Endothelial cell of umbilical vein (primary cell): ENCODE measurements at regions of chr5 and their contacts with region 1.

Region 1: GRCh38 chr5:1799602-1800471 is at the start of gene MRPL36:
- DNase-seq: peak; percentile 91
- H3K4me3 ChIP-seq: peak within 1 kb of the TSS; percentile 58 to 90 (median 62)
- H3K27ac ChIP-seq: peak within 1 kb of the TSS; percentile 70
- H3K4me1 ChIP-seq: peaks cover 21% of the 10 kb centered on the region
- H3K27me3 ChIP-seq: no peaks in the 10 kb centered on the region
- CTCF ChIP-seq: peak in 1 of 2 donors; percentile 13
- POLR2A ChIP-seq: peak; percentile 85
- total RNA-seq, gene MRPL36: 63.4 and 70.3 TPM in 2 replicates

Region 2: DNA sequence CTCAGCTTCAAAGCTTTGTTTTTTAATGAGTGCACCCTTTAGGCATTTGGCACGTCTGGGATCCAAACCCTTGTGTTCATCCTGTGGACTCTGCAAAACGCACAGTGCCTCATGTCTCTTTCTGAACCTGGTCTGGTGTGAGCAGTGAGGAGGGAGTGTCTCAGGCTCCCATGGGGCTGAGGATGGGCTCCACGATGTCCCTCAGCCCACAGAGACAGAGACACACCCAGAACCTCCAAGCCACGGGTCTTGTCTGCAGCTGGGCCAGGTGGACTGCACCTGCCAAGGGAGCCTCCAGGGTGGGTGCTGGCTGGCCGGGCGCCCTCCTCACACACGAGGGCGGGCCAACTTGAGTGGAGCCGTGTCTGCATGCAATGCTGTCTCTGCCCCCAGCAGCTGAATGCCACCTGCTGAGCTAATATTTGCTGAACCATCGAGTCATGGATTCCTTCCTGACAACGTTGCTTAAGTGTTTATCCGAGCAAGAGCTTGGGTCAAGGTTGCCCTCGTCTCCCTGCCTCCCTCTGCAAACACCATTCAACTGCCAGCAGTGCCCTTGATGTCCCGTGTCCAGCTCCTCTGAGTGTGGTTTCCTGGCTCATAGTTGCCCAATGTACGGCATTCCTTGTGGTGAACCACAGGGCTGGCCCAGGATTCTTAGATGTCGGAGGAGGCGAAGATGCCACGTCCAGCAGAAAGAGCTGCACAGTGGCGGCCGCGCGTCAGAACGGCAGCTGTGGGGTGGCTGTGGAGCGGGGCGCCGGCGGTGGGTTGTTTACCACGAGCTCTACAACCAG is 244.6 kb before region 1 on chr5:
- CTCF ChIA-PET with region 1: no interaction called
- POLR2A ChIA-PET with region 1: no interaction called
- dilution Hi-C with region 1: no loop called
- intact Hi-C with region 1: no loop called
- DNase-seq: no peak
- H3K4me3 ChIP-seq: no peak overlapping the region
- H3K27ac ChIP-seq: no peak overlapping the region
- H3K4me1 ChIP-seq: peaks cover 5% of the 10 kb centered on the region
- H3K27me3 ChIP-seq: peaks cover 0 to 2% of the 10 kb centered on the region in 2 experiments
- CTCF ChIP-seq: no peak
- POLR2A ChIP-seq: no peak

Region 3: DNA sequence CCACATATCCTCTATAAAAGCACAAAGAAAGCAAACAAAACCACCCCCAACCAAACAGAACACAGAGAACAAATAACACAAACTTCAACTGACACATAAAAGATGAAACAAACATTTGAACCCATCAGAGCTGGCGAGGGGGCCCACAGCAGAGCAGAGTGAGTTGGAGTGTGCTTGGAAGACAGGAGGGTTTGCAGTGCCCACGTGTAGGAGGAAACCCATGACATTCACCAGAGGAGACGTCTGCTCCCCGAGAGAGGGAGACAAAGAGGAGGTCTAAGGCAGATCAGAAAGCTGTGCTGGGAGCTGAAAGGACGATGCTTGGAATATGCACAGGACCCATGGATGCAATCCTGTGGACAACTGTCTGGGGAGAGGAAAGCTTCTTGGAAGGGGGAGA is 27.2 kb before region 1 on chr5:
- CTCF ChIA-PET with region 1: interaction called, 20 read pairs
- POLR2A ChIA-PET with region 1: no interaction called
- dilution Hi-C with region 1: no loop called
- intact Hi-C with region 1: no loop called
- DNase-seq: peak; percentile 30
- H3K4me3 ChIP-seq: no peak overlapping the region
- H3K27ac ChIP-seq: no peak overlapping the region
- H3K4me1 ChIP-seq: no peaks in the 10 kb centered on the region
- H3K27me3 ChIP-seq: peaks cover 0 to 3% of the 10 kb centered on the region in 2 experiments
- CTCF ChIP-seq: peak in 1 of 2 donors; percentile 45
- POLR2A ChIP-seq: no peak

Region 4: GRCh38 chr5:2129568-2130272 is 329.9 kb after region 1 on chr5:
- CTCF ChIA-PET with region 1: no interaction called
- POLR2A ChIA-PET with region 1: no interaction called
- dilution Hi-C with region 1: no loop called
- intact Hi-C with region 1: no loop called
- DNase-seq: no peak
- H3K4me3 ChIP-seq: no peak overlapping the region
- H3K27ac ChIP-seq: no peak overlapping the region
- H3K4me1 ChIP-seq: no peaks in the 10 kb centered on the region
- H3K27me3 ChIP-seq: no peaks in the 10 kb centered on the region
- CTCF ChIP-seq: no peak
- POLR2A ChIP-seq: no peak